ENCODE measurements at regions of chr14 and their contacts with region 1.

Region 1: GRCh38 chr14:105045710-105046326 is 19.4 kb downstream of the GPR132 start:
- DNase-seq: peak; percentile 79
- H3K4me3 Mint-ChIP-seq: no peak overlapping the region
- H3K27ac Mint-ChIP-seq: no peak overlapping the region
- H3K4me1 Mint-ChIP-seq: no peaks in the 10 kb centered on the region
- H3K27me3 Mint-ChIP-seq: no peaks in the 10 kb centered on the region
- CTCF ChIP-seq: peak; percentile 100

Region 2: GRCh38 chr14:104895786-104896661 is 149.8 kb before region 1 on chr14:
- CTCF ChIA-PET with region 1: interaction called, 12 read pairs
- POLR2A ChIA-PET with region 1: no interaction called
- intact Hi-C with region 1: loop called (anchors 1 kb)
- DNase-seq: no peak
- H3K4me3 Mint-ChIP-seq: no peak overlapping the region
- H3K27ac Mint-ChIP-seq: no peak overlapping the region
- H3K4me1 Mint-ChIP-seq: no peaks in the 10 kb centered on the region
- H3K27me3 Mint-ChIP-seq: no peaks in the 10 kb centered on the region
- CTCF ChIP-seq: no peak

Region 3: DNA sequence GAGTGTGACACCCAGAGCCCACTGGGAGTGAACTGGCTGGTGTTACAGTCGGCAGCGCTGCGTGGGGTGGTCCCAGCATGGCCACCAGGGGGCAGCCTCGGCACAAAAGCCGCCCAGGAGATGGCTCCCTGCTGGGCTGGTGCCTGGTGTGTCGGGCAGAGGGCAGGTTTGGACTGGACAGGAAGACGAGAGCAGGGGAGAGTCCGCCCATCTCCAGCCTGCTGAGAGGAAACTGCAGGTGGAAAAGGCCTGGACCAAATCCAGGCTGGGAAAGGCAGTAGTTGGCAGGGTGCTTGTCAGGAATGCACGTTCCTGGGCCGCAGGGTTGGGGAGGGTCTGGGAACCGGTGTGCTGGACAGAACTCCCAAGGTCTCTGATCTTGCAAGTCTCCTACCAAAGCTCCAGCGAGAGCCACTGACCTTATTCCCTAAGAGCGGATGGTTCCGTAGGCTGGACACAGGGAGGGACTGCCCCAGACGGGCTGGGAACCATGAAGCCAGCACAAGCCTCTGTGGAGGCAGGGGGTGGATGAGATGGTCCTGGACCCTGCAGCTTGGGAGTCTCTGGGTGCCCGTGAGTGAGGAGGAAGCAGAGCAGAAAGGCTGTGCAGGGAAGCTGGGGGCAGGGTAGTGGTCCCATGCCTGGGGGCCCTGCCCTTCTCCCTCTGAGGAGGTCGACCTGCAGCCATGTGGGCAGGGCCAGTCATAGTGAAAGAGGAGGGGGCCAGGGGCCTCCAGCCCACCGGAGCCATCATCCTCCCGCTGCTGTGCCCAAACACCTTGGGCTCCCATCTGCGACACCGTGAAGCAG is 69.4 kb before region 1 on chr14:
- CTCF ChIA-PET with region 1: interaction called, 167 read pairs
- POLR2A ChIA-PET with region 1: interaction called, 39 read pairs
- intact Hi-C with region 1: loop called (anchors 1 kb)
- DNase-seq: peak; percentile 93
- H3K4me3 Mint-ChIP-seq: peak overlapping the region; percentile 97
- H3K27ac Mint-ChIP-seq: no peak overlapping the region
- H3K4me1 Mint-ChIP-seq: peaks cover 41% of the 10 kb centered on the region
- H3K27me3 Mint-ChIP-seq: no peaks in the 10 kb centered on the region
- CTCF ChIP-seq: peak; percentile 98

Region 4: DNA sequence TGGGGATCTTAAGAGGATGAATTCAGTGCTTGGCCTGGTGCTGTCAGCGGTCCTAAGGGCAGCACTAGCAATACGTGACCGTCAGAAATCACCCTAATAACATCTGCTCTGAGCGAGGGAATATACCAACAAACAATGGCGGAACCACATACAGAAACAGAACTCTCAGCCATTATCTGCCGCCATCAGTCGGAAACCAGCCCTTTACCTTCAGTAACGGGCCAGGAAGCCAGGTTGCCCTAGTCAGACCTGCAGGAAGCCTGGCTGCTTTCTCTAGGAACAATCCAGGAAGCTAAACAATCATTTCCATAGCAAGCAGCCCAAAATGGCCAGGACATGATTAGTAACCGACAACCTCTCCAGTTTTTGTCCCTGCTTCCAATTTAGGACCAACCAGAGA is 30.6 kb before region 1 on chr14:
- CTCF ChIA-PET with region 1: interaction called, 18 read pairs
- POLR2A ChIA-PET with region 1: interaction called, 7 read pairs
- intact Hi-C with region 1: no loop called
- DNase-seq: no peak
- H3K4me3 Mint-ChIP-seq: no peak overlapping the region
- H3K27ac Mint-ChIP-seq: peak overlapping the region; percentile 86
- H3K4me1 Mint-ChIP-seq: peaks cover 40% of the 10 kb centered on the region
- H3K27me3 Mint-ChIP-seq: no peaks in the 10 kb centered on the region
- CTCF ChIP-seq: no peak

Region 5: DNA sequence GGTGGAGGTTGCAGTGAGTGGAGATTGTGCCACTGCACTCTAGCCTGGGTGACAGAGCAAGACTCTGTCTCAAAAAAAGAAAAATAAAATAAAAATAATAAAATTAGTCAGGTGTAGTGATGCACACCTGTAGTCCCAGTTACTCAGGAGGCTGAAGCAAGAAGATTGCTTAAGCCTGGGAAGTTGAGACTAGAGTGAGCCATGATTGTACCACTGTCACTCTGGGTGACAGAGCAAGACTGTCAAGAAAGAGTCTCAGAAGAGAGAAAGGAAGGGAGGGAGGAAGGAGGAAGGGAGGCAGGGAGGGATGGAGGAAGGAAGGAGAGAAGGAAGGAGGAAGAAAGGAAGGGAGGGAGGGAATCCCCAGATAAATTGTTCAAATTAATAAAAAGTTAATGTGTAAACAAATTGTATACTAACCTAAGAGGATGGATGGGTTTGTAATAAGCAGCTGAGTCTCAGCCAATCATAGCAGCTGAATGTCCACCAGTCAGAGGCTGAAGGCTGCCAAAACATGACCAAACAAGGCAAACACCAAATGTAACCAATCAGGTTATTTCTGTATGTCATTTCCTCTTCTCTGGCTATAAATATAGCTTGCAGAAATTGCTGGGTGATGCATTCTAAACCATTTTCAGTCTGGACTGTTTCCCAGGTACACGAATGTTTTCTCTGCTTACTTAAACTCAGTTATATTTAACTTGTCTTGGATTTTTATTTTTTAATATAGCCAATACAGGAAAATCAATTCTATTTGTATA is 18.8 kb before region 1 on chr14:
- CTCF ChIA-PET with region 1: interaction called, 44 read pairs
- POLR2A ChIA-PET with region 1: interaction called, 9 read pairs
- intact Hi-C with region 1: no loop called
- DNase-seq: peak; percentile 33
- H3K4me3 Mint-ChIP-seq: no peak overlapping the region
- H3K27ac Mint-ChIP-seq: peak overlapping the region; percentile 64
- H3K4me1 Mint-ChIP-seq: peaks cover 18% of the 10 kb centered on the region
- H3K27me3 Mint-ChIP-seq: no peaks in the 10 kb centered on the region
- CTCF ChIP-seq: no peak

Region 6: GRCh38 chr14:105258846-105259245 is 213.0 kb after region 1 on chr14:
- CTCF ChIA-PET with region 1: no interaction called
- POLR2A ChIA-PET with region 1: no interaction called
- intact Hi-C with region 1: no loop called
- DNase-seq: no peak
- H3K4me3 Mint-ChIP-seq: no peak overlapping the region
- H3K27ac Mint-ChIP-seq: no peak overlapping the region
- H3K4me1 Mint-ChIP-seq: no peaks in the 10 kb centered on the region
- H3K27me3 Mint-ChIP-seq: no peaks in the 10 kb centered on the region
- CTCF ChIP-seq: no peak

Measured in MCF 10A (cell line).